ENCODE measurements at regions of chr4 and their contacts with region 1.

Region 1: GRCh38 chr4:88523325-88524129 is at the start of gene PYURF:
- DNase-seq: peak; percentile 79
- H3K4me3 ChIP-seq: peak within 1 kb of the TSS; percentile 66
- CTCF ChIP-seq: no peak

Region 2: DNA sequence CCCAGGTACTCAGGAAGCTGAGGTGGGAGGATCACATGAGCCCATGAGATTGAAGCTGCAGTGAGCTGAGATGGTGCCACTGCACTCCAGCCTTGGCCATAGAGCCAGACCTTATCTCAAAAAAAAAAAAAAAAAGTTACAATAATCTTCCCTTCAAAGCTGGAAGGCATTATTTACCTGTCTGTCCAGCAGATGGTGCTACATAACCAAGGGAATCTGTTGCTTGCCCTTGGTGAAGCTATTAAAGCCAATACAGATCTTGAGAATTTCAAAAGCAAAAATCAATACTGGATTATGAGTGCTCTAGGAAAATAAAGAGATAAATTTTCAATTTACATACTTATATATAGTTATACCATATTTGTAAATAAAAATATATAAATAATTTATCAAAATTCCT is 490.2 kb before region 1 on chr4:
- in situ Hi-C with region 1: loop called (anchors 25 kb)
- DNase-seq: peak; percentile 62
- H3K4me3 ChIP-seq: no peak overlapping the region
- CTCF ChIP-seq: peak; percentile 68

Region 3: GRCh38 chr4:88352062-88352740 is 171.3 kb before region 1 on chr4:
- in situ Hi-C with region 1: loop called (anchors 25 kb)
- DNase-seq: no peak
- H3K4me3 ChIP-seq: no peak overlapping the region
- CTCF ChIP-seq: no peak

Region 4: GRCh38 chr4:88477229-88477860 is 46.2 kb before region 1 on chr4:
- in situ Hi-C with region 1: no loop called
- DNase-seq: no peak
- H3K4me3 ChIP-seq: no peak overlapping the region
- CTCF ChIP-seq: no peak

Measured in astrocyte of the cerebellum (primary cell).